Cardiac septum (tissue), 1 donor: ENCODE measurements at regions of chr16 and their contacts with region 1.

Region 1: GRCh38 chr16:1351582-1352362 is at the starts of genes GNPTG and TSR3:
- DNase-seq: peak; percentile 94
- total RNA-seq, gene GNPTG: 32.3 TPM
- total RNA-seq, gene TSR3: 55.0 TPM

Region 2: GRCh38 chr16:1309888-1310831 is 41.6 kb before region 1 on chr16:
- intact Hi-C with region 1: loop called (anchors 5 kb)
- DNase-seq: no peak

Region 3: GRCh38 chr16:1511662-1512575 is 160.1 kb after region 1 on chr16:
- intact Hi-C with region 1: no loop called
- DNase-seq: no peak